Activated naive CD4-positive, alpha-beta T cell treated with anti-CD3 and anti-CD28 coated beads for 36 hours (primary cell): ENCODE measurements at regions of chr12 and their contacts with region 1.

Region 1: GRCh38 chr12:2853626-2854025 is 3.2 kb downstream of the TEX52 start:
- DNase-seq: peak; percentile 62
- H3K4me3 Mint-ChIP-seq: no peak overlapping the region
- H3K27ac Mint-ChIP-seq: no peak overlapping the region
- H3K4me1 Mint-ChIP-seq: peaks cover 2% of the 10 kb centered on the region
- H3K27me3 Mint-ChIP-seq: no peaks in the 10 kb centered on the region

Region 2: DNA sequence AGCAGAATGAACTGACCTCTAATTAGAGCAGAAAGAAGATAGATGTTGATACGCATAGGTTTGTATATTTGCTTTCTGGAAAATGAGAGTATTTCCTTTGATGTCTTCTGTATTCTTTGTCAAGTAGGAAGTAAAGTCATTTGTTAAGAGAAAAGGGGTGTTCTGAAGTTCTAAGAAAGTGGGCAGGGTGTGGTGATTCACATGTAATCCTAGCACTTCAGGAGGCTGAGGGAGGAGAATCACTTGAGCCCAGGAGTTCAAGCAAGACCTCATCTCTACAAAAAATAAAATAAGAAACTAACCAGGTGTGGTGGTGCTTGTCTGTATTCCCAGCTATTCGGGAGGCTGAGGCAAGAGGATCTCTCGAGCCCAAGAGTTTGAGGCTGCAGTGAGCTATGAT is 26.2 kb after region 1 on chr12:
- CTCF ChIA-PET with region 1: no interaction called
- intact Hi-C with region 1: no loop called
- DNase-seq: peak; percentile 34
- H3K4me3 Mint-ChIP-seq: no peak overlapping the region
- H3K27ac Mint-ChIP-seq: peak overlapping the region; percentile 73
- H3K4me1 Mint-ChIP-seq: peaks cover 32% of the 10 kb centered on the region
- H3K27me3 Mint-ChIP-seq: no peaks in the 10 kb centered on the region

Region 3: GRCh38 chr12:2944401-2945047 is 90.9 kb after region 1 on chr12:
- CTCF ChIA-PET with region 1: interaction called, 32 read pairs
- intact Hi-C with region 1: loop called (anchors 1 kb)
- DNase-seq: peak; percentile 77
- H3K4me3 Mint-ChIP-seq: peak overlapping the region; percentile 36
- H3K27ac Mint-ChIP-seq: no peak overlapping the region
- H3K4me1 Mint-ChIP-seq: peaks cover 2% of the 10 kb centered on the region
- H3K27me3 Mint-ChIP-seq: peaks cover 3% of the 10 kb centered on the region